ENCODE measurements at regions of chr19 and their contacts with region 1.

Region 1: GRCh38 chr19:1189419-1189818 is 15.4 kb upstream of the SBNO2 start:
- H3K4me3 ChIP-seq: no peak overlapping the region
- H3K27ac ChIP-seq: no peak overlapping the region
- H3K4me1 ChIP-seq: no peaks in the 10 kb centered on the region
- CTCF ChIP-seq: no peak

Region 2: DNA sequence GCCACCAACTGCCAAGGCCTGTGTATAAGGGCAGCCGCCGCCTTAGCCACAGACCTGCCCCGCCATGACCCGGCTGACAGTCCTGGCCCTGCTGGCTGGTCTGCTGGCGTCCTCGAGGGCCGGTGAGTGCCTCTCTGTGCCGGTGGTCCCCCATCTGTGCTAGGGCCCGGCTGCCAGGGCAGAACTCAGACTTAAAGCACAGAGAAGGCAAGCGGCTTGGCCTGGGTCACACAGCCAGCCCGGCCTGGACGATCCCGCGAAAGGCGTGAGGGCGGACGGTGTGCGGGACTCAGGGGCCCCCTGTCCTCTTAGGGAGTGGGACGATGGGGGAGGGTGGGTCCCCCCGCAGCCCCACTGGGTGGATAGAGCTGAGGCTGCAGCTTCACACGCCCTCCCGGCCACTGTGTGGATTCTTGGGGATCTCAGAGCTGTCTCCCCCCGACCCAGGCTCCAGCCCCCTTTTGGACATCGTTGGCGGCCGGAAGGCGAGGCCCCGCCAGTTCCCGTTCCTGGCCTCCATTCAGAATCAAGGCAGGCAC is 361.6 kb before region 1 on chr19 and contains the start of gene AZU1:
- CTCF ChIA-PET with region 1: no interaction called
- POLR2A ChIA-PET with region 1: no interaction called
- H3K4me3 ChIP-seq: no peak within 1 kb of the TSS
- H3K27ac ChIP-seq: no peak within 1 kb of the TSS
- H3K4me1 ChIP-seq: no peaks in the 10 kb centered on the region
- CTCF ChIP-seq: no peak

Region 3: GRCh38 chr19:1046836-1047695 is 142.4 kb before region 1 on chr19:
- CTCF ChIA-PET with region 1: no interaction called
- POLR2A ChIA-PET with region 1: no interaction called
- H3K4me3 ChIP-seq: no peak overlapping the region
- H3K27ac ChIP-seq: no peak overlapping the region
- H3K4me1 ChIP-seq: no peaks in the 10 kb centered on the region; the same call in 1 of the 2 replicates
- CTCF ChIP-seq: no peak

Region 4: GRCh38 chr19:1205114-1206062 is 16.0 kb after region 1 on chr19 and contains the start of gene STK11:
- CTCF ChIA-PET with region 1: interaction called, 24 read pairs
- POLR2A ChIA-PET with region 1: interaction called, 3 read pairs
- H3K4me3 ChIP-seq: peak within 1 kb of the TSS; percentile 53
- H3K27ac ChIP-seq: peak within 1 kb of the TSS; percentile 99
- H3K4me1 ChIP-seq: peaks cover 7% of the 10 kb centered on the region
- CTCF ChIP-seq: no peak

Measured in HEK293 (cell line).